HCT116 (cell line): ENCODE measurements at regions of chr4 and their contacts with region 1.

Region 1: DNA sequence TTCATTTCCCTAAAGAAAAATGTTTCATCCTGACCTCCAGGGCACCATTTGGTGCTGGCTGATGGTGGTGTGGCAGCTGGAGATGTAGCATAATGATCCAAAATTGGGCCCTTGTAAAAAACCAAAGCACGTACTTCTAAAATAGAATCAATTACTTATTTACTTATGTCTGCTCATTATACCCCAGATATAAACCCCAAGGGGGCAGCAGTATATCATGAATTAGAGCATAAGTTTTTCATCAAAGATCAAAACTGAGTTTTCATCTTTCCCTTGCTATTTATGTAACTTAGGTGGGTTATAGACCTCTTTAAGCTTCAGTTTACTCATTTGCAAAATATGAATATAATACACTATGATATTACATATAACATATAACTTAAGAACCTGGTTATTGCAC is 241.1 kb downstream of the TACR3 start:
- DNase-seq: no peak
- ATAC-seq: no peak
- H3K4me3 ChIP-seq: no peak overlapping the region
- H3K27ac ChIP-seq: no peak overlapping the region
- H3K4me1 ChIP-seq: no peaks in the 10 kb centered on the region
- H3K27me3 ChIP-seq: no peaks in the 10 kb centered on the region
- CTCF ChIP-seq: peak in 2 of 3 experiments; percentile 42 to 44; a peak in 3 of 6 replicates
- POLR2A ChIP-seq: no peak
- RAD21 ChIP-seq: peak; percentile 72

Region 2: GRCh38 chr4:103786014-103786413 is 307.3 kb after region 1 on chr4:
- CTCF ChIA-PET with region 1: interaction called, 3 read pairs
- POLR2A ChIA-PET with region 1: no interaction called
- RAD21 ChIA-PET with region 1: no interaction called
- intact Hi-C with region 1: loop called (anchors 1 kb)
- DNase-seq: peak; percentile 56
- ATAC-seq: peak; percentile 91
- H3K4me3 ChIP-seq: no peak overlapping the region
- H3K27ac ChIP-seq: no peak overlapping the region
- H3K4me1 ChIP-seq: no peaks in the 10 kb centered on the region
- H3K27me3 ChIP-seq: no peaks in the 10 kb centered on the region
- CTCF ChIP-seq: peak; percentile 60 to 74 (median 64); a peak in 5 of 6 replicates
- POLR2A ChIP-seq: no peak
- RAD21 ChIP-seq: peak; percentile 87

Region 3: GRCh38 chr4:103915224-103915869 is 436.6 kb after region 1 on chr4:
- CTCF ChIA-PET with region 1: no interaction called
- POLR2A ChIA-PET with region 1: no interaction called
- RAD21 ChIA-PET with region 1: no interaction called
- intact Hi-C with region 1: loop called (anchors 2 kb)
- DNase-seq: peak; percentile 19
- ATAC-seq: peak; percentile 59; the same call in 1 of the 2 replicates
- H3K4me3 ChIP-seq: no peak overlapping the region
- H3K27ac ChIP-seq: no peak overlapping the region
- H3K4me1 ChIP-seq: no peaks in the 10 kb centered on the region
- H3K27me3 ChIP-seq: no peaks in the 10 kb centered on the region
- CTCF ChIP-seq: peak; percentile 54 to 77 (median 73); a peak in 5 of 6 replicates
- POLR2A ChIP-seq: no peak
- RAD21 ChIP-seq: peak; percentile 76

Region 4: GRCh38 chr4:103934178-103934789 is 455.6 kb after region 1 on chr4:
- CTCF ChIA-PET with region 1: interaction called, 3 read pairs
- POLR2A ChIA-PET with region 1: no interaction called
- RAD21 ChIA-PET with region 1: no interaction called
- intact Hi-C with region 1: loop called (anchors 5 kb)
- DNase-seq: peak; percentile 58
- ATAC-seq: peak; percentile 77
- H3K4me3 ChIP-seq: no peak overlapping the region
- H3K27ac ChIP-seq: no peak overlapping the region
- H3K4me1 ChIP-seq: no peaks in the 10 kb centered on the region
- H3K27me3 ChIP-seq: no peaks in the 10 kb centered on the region
- CTCF ChIP-seq: peak; percentile 53 to 77 (median 58)
- POLR2A ChIP-seq: no peak
- RAD21 ChIP-seq: peak; percentile 75

Region 5: DNA sequence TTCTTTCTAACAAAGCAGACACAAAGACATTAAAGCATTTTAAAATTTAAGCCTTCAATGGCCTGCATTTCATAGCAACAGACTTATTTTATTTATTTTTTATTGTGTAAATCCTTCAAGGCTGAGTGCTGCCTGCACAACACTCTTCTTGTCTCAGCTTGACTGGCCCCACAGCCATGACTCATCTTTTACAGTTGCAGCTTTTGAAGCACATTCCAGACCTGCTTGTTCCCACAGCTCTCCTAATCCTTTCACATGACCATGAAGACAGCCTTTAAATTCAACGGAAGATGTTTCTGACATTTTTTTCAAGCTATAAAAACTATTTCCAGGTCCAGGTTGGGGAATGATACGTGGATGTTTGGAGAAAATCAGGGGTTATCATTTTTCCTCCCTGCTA is 517.9 kb after region 1 on chr4:
- CTCF ChIA-PET with region 1: no interaction called
- POLR2A ChIA-PET with region 1: no interaction called
- RAD21 ChIA-PET with region 1: no interaction called
- intact Hi-C with region 1: loop called (anchors 2 kb)
- DNase-seq: peak; percentile 78
- ATAC-seq: peak; percentile 91
- H3K4me3 ChIP-seq: peak overlapping the region; percentile 26 to 43
- H3K27ac ChIP-seq: peak overlapping the region; percentile 39; the same call in 1 of the 2 replicates
- H3K4me1 ChIP-seq: peaks cover 11 to 19% of the 10 kb centered on the region in 2 experiments; a peak in 3 of 4 replicates
- H3K27me3 ChIP-seq: no peaks in the 10 kb centered on the region
- CTCF ChIP-seq: no peak
- POLR2A ChIP-seq: no peak
- RAD21 ChIP-seq: no peak